OCI-LY7 (cell line): ENCODE measurements at regions of chr2 and their contacts with region 1.

Region 1: GRCh38 chr2:99317166-99317872 is 16.3 kb upstream of the LYG1 start:
- DNase-seq: no peak
- H3K4me3 ChIP-seq: no peak overlapping the region
- H3K27ac ChIP-seq: no peak overlapping the region
- H3K4me1 ChIP-seq: no peaks in the 10 kb centered on the region
- CTCF ChIP-seq: no peak

Region 2: DNA sequence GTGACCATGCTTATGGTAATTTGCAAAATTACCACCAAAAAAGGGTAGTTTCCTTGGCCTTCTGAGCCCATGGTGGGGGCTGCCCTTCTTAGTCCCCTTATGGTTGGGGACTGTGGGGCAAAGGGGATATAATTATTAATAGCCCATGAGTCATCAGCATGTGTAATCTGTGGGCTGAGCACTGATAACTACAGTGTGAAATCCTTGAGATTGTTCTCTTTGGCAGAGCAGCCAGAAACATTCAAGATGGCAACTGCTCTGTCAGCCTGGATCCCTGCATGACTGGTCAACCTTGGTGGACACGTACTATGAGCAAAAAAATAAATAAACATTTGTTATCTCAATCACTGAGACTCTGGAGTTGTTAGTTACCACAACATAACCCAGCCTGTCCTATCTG is 647.6 kb before region 1 on chr2:
- CTCF ChIA-PET with region 1: no interaction called
- POLR2A ChIA-PET with region 1: no interaction called
- intact Hi-C with region 1: loop called (anchors 5 kb)
- DNase-seq: no peak
- H3K4me3 ChIP-seq: no peak overlapping the region
- H3K27ac ChIP-seq: no peak overlapping the region
- H3K4me1 ChIP-seq: no peaks in the 10 kb centered on the region
- CTCF ChIP-seq: no peak

Region 3: DNA sequence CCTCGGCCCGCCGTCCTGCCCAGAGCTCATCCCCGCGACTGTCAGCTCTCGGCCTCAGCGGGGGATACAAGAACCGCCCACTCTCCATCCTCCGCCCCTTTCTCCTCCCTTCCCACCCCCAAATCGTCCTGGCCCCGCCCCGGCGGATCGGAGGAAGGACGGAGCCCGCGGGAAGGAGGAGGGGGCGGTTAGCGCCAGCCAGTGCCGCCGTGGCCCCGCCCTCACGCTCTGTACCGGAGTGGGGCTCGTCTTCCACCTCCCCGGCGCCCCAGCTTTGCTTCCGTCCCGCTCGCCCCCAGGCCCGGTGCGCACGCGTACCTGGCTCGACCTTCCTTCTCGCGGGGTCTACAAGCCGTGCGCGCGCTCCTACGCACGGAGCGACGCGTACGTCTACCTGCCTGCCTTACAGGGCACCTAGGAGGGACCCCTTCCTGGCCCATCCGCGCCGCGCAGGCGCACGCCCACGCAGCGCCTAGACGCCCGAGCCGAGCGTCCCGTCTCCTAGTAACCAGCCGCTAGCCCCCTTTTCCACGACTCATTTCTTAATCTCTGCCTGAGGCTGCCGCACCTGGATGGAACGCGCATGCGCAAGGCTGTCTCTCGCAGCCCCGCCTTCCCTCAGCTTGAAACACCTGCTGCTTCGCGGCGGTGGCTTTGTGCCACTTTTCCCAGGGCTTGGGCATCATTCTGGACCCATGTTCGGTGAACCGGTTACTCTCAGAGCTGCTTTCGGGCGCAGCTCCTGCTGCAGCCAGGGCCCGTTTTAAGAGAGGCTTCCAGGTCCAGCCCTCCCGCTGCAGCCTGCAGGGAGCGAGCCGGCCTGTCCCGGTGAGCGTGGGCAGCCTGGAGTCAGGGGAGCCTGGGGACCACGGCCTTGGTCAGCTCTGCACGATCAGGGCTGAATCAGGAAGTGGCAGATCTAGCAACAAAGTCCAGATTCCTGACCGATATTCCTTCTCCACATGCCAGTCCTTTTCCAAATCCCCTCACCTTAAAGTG is 175.9 kb before region 1 on chr2 and contains the start of gene C2orf15:
- CTCF ChIA-PET with region 1: no interaction called
- POLR2A ChIA-PET with region 1: no interaction called
- intact Hi-C with region 1: no loop called
- DNase-seq: peak; percentile 91
- H3K4me3 ChIP-seq: peak within 1 kb of the TSS; percentile 71
- H3K27ac ChIP-seq: peak within 1 kb of the TSS; percentile 48
- H3K4me1 ChIP-seq: peaks cover 12% of the 10 kb centered on the region
- CTCF ChIP-seq: no peak
- total RNA-seq, gene C2orf15: 0.25 and 0.31 TPM in 2 replicates

Region 4: GRCh38 chr2:99389371-99389770 is 72.1 kb after region 1 on chr2:
- CTCF ChIA-PET with region 1: no interaction called
- POLR2A ChIA-PET with region 1: no interaction called
- intact Hi-C with region 1: no loop called
- DNase-seq: no peak
- H3K4me3 ChIP-seq: no peak overlapping the region
- H3K27ac ChIP-seq: no peak overlapping the region
- H3K4me1 ChIP-seq: no peaks in the 10 kb centered on the region
- CTCF ChIP-seq: no peak

Region 5: GRCh38 chr2:99448556-99448955 is 131.2 kb after region 1 on chr2:
- CTCF ChIA-PET with region 1: no interaction called
- POLR2A ChIA-PET with region 1: no interaction called
- intact Hi-C with region 1: no loop called
- DNase-seq: no peak
- H3K4me3 ChIP-seq: no peak overlapping the region
- H3K27ac ChIP-seq: no peak overlapping the region
- H3K4me1 ChIP-seq: no peaks in the 10 kb centered on the region
- CTCF ChIP-seq: no peak